HCT116 (cell line): ENCODE measurements at regions of chr6 and their contacts with region 1.

Region 1: GRCh38 chr6:14210663-14211561 is 93.3 kb downstream of the CD83 start:
- DNase-seq: peak; percentile 72
- ATAC-seq: peak; percentile 90
- H3K4me3 ChIP-seq: peak overlapping the region; percentile 63 to 76
- H3K27ac ChIP-seq: peak overlapping the region; percentile 65; the same call in 1 of the 2 replicates
- H3K4me1 ChIP-seq: peaks cover 6 to 25% of the 10 kb centered on the region in 2 experiments
- H3K27me3 ChIP-seq: no peaks in the 10 kb centered on the region
- CTCF ChIP-seq: peak; percentile 22 to 49 (median 41); a peak in 3 of 6 replicates
- POLR2A ChIP-seq: no peak
- RAD21 ChIP-seq: peak; percentile 81

Region 2: DNA sequence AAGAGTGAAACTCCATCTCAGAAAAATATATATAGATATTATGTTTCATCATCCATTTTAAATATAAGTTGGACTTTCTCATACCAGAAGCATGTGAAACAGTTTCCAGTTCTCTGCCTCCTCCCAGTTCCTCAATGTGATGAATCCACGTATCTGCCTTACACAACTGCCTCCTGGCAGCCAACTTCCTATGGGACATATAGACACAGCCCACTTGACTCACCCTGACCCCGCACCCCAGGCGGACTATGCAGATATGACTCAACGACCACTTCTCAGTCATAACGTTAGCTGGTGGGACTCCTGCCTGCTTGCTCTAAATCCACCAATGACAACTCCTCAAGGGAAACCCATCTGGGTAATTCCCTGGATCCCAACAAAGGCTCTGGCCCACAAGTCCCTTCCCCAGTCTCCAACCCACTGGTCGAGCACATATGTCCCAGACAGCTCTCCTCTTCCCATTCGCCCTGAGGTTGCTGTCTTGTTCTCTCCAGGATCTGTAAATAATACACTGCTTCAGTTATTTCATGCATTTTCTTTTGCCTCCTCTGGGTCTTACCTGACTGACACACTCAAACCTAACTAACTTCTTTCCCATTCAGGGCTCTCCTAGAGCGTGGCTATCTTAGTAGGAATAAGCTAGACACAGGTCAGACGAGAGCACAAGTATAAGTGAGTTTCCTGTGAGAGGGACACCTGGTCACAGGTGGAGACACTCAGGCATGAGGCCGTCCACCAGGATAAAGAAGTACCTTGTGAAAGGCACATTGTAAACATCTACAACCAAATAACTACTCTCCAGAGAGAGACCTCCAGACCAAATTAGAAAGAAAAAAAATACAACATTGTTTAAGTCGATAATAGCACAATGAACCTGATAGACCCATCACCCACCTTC is 455.2 kb after region 1 on chr6:
- CTCF ChIA-PET with region 1: no interaction called
- POLR2A ChIA-PET with region 1: no interaction called
- RAD21 ChIA-PET with region 1: no interaction called
- intact Hi-C with region 1: no loop called
- DNase-seq: no peak
- ATAC-seq: no peak
- H3K4me3 ChIP-seq: no peak overlapping the region
- H3K27ac ChIP-seq: no peak overlapping the region
- H3K4me1 ChIP-seq: peaks cover 0 to 5% of the 10 kb centered on the region in 2 experiments; a peak in 1 of 4 replicates
- H3K27me3 ChIP-seq: peaks cover 4% of the 10 kb centered on the region
- CTCF ChIP-seq: no peak
- POLR2A ChIP-seq: no peak
- RAD21 ChIP-seq: no peak

Region 3: DNA sequence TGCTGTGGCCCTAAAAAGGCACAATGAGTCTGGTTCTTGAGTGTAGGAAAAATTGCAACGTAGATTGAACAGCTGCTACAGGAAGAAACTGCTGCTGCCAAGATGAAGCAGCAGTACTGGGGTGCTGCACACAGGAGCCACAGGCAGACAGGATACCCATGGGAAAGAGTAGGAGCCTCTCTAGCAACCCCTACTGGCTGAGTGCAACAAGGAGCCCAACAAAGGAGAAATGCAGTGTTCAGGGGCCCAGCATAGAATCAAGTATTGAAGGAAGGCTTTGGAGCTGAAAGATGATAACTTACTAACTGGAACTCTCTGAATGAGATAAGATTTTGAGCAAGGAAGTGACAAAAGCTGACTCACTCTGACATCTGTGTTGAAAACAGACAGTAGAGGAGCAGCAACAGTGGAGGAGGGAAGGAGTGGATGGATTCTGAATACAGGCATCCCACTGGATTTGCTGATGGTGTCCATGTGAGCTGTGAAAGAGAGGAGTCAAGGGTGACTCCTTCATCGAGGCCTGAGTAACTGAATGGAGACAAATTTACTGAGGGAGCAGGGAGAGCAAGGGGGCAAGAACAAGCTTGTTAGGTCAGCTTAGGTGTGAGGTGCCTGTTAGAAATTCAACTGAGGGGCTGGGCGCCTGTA is 500.3 kb after region 1 on chr6:
- CTCF ChIA-PET with region 1: no interaction called
- POLR2A ChIA-PET with region 1: no interaction called
- RAD21 ChIA-PET with region 1: no interaction called
- intact Hi-C with region 1: loop called (anchors 5 kb)
- DNase-seq: no peak
- ATAC-seq: peak; percentile 94
- H3K4me3 ChIP-seq: no peak overlapping the region
- H3K27ac ChIP-seq: no peak overlapping the region
- H3K4me1 ChIP-seq: peaks cover 0 to 63% of the 10 kb centered on the region in 2 experiments; a peak in 2 of 4 replicates
- H3K27me3 ChIP-seq: no peaks in the 10 kb centered on the region
- CTCF ChIP-seq: peak; percentile 42 to 84 (median 72); a peak in 5 of 6 replicates
- POLR2A ChIP-seq: no peak
- RAD21 ChIP-seq: peak; percentile 65

Region 4: GRCh38 chr6:15389765-15390723 is 1179.1 kb after region 1 on chr6:
- CTCF ChIA-PET with region 1: no interaction called
- POLR2A ChIA-PET with region 1: no interaction called
- RAD21 ChIA-PET with region 1: no interaction called
- intact Hi-C with region 1: loop called (anchors 10 kb)
- DNase-seq: peak; percentile 7
- ATAC-seq: peak; percentile 86
- H3K4me3 ChIP-seq: no peak overlapping the region
- H3K27ac ChIP-seq: no peak overlapping the region
- H3K4me1 ChIP-seq: no peaks in the 10 kb centered on the region
- H3K27me3 ChIP-seq: no peaks in the 10 kb centered on the region
- CTCF ChIP-seq: peak; percentile 43 to 72 (median 57); a peak in 5 of 6 replicates
- POLR2A ChIP-seq: no peak
- RAD21 ChIP-seq: peak; percentile 78

Region 5: GRCh38 chr6:15491255-15491985 is 1280.5 kb after region 1 on chr6:
- CTCF ChIA-PET with region 1: no interaction called
- POLR2A ChIA-PET with region 1: no interaction called
- RAD21 ChIA-PET with region 1: no interaction called
- intact Hi-C with region 1: loop called (anchors 1 kb)
- DNase-seq: peak; percentile 21
- ATAC-seq: peak; percentile 82
- H3K4me3 ChIP-seq: no peak overlapping the region
- H3K27ac ChIP-seq: no peak overlapping the region
- H3K4me1 ChIP-seq: no peaks in the 10 kb centered on the region
- H3K27me3 ChIP-seq: no peaks in the 10 kb centered on the region
- CTCF ChIP-seq: peak; percentile 52 to 96 (median 92); a peak in 5 of 6 replicates
- POLR2A ChIP-seq: no peak
- RAD21 ChIP-seq: peak; percentile 79